Heart right ventricle (tissue), 16 donors: ENCODE measurements at regions of chr2 and their contacts with region 1.

Region 1: GRCh38 chr2:46275973-46276372 is 21.2 kb upstream of the EPAS1 start:
- DNase-seq: peak; percentile 81 to 87
- ATAC-seq: peak; percentile 75 to 84 (median 82)
- H3K4me3 ChIP-seq: peak overlapping the region in 1 of 10 donors; percentile 4
- H3K27ac ChIP-seq: peak overlapping the region; percentile 42 to 82 (median 72)
- H3K4me1 ChIP-seq: peaks cover 16 to 73% (median 47%) of the 10 kb centered on the region in 9 donors
- H3K27me3 ChIP-seq: no peaks in the 10 kb centered on the region
- CTCF ChIP-seq: peak in 2 of 9 donors; percentile 7 to 17

Region 2: DNA sequence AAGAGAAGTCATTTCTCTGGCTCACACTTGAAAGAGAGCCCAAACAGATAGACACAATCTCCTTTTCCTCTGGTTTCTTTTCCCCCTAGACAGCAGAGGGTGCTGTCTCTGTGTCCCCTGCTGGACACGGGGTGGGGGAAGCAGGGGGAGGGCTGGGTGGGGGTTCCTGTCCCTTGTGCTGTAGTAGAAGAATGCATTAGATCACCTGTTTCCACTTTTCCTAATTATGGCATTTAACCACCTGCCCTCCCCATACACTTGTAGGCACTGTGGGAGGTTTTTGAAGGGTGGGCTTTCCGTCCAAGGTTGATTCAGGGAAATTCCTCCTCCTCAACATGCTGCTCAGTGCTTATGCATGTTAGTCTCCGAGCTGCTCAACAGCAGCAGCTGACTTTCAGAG is 185.0 kb before region 1 on chr2:
- intact Hi-C with region 1: loop called in 2 of 10 experiments (anchors 5 to 10 kb)
- DNase-seq: peak in 1 of 2 donors; percentile 25
- ATAC-seq: peak; percentile 72 to 90 (median 84)
- H3K4me3 ChIP-seq: peak overlapping the region in 1 of 10 donors; percentile 8
- H3K27ac ChIP-seq: peak overlapping the region in 8 of 10 donors; percentile 19 to 65 (median 57)
- H3K4me1 ChIP-seq: peaks cover 0 to 51% (median 11%) of the 10 kb centered on the region in 9 donors
- H3K27me3 ChIP-seq: no peaks in the 10 kb centered on the region
- CTCF ChIP-seq: peak in 8 of 9 donors; percentile 33 to 65 (median 48)

Region 3: GRCh38 chr2:46097714-46098480 is 178.1 kb before region 1 on chr2:
- intact Hi-C with region 1: loop called in 2 of 10 experiments (anchors 5 to 10 kb)
- DNase-seq: peak in 1 of 2 donors; percentile 89
- ATAC-seq: peak; percentile 82 to 97 (median 93)
- H3K4me3 ChIP-seq: no peak overlapping the region
- H3K27ac ChIP-seq: peak overlapping the region; percentile 11 to 92 (median 80)
- H3K4me1 ChIP-seq: peaks cover 0 to 39% (median 22%) of the 10 kb centered on the region in 9 donors
- H3K27me3 ChIP-seq: no peaks in the 10 kb centered on the region
- CTCF ChIP-seq: no peak

Region 4: GRCh38 chr2:46134531-46135181 is 141.3 kb before region 1 on chr2:
- intact Hi-C with region 1: loop called in 1 of 10 experiments (anchors 5 kb)
- DNase-seq: peak; percentile 36 to 68
- ATAC-seq: peak; percentile 59 to 87 (median 77)
- H3K4me3 ChIP-seq: no peak overlapping the region
- H3K27ac ChIP-seq: peak overlapping the region; percentile 54 to 85 (median 73)
- H3K4me1 ChIP-seq: peaks cover 5 to 49% (median 32%) of the 10 kb centered on the region in 9 donors
- H3K27me3 ChIP-seq: no peaks in the 10 kb centered on the region
- CTCF ChIP-seq: peak in 1 of 9 donors; percentile 11

Region 5: GRCh38 chr2:46187112-46187618 is 88.8 kb before region 1 on chr2:
- intact Hi-C with region 1: loop called in 1 of 10 experiments (anchors 10 kb)
- DNase-seq: peak in 1 of 2 donors; percentile 52
- ATAC-seq: peak in 7 of 8 donors; percentile 40 to 75 (median 61)
- H3K4me3 ChIP-seq: peak overlapping the region in 7 of 10 donors; percentile 13 to 39 (median 27)
- H3K27ac ChIP-seq: peak overlapping the region; percentile 57 to 89 (median 76)
- H3K4me1 ChIP-seq: peaks cover 0 to 31% (median 20%) of the 10 kb centered on the region in 9 donors
- H3K27me3 ChIP-seq: no peaks in the 10 kb centered on the region
- CTCF ChIP-seq: no peak

Region 6: DNA sequence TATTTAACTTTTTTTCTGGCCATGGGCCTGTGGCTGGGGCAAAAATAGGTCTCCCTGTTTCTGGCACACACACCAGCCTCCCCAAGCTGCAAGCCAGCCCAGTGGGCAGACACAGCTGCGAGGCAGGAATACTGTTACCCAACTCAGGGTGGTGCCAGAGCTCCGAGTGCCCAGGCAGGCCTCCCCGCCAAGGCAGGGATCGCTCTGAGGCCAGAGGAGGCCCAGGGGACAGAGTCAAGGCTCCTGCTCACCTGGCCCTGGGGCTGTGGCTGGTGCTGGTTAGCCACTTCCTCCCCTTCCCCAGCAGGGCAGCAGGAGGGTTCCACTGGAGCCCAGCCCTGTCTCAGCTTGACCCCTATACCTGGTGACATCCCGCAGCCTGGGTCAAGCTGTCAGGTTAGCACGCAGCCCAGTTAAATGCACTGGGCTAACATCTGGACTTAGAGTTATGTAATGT is 45.8 kb before region 1 on chr2:
- intact Hi-C with region 1: loop called in 1 of 10 experiments (anchors 2 kb)
- DNase-seq: peak; percentile 23 to 51
- ATAC-seq: peak; percentile 74 to 91 (median 85)
- H3K4me3 ChIP-seq: no peak overlapping the region
- H3K27ac ChIP-seq: peak overlapping the region in 8 of 10 donors; percentile 4 to 61 (median 42)
- H3K4me1 ChIP-seq: peaks cover 3 to 35% (median 21%) of the 10 kb centered on the region in 9 donors
- H3K27me3 ChIP-seq: no peaks in the 10 kb centered on the region
- CTCF ChIP-seq: peak in 8 of 9 donors; percentile 10 to 57 (median 46)

Region 7: GRCh38 chr2:46470114-46470628 is 194.2 kb after region 1 on chr2:
- intact Hi-C with region 1: no loop called
- DNase-seq: no peak
- ATAC-seq: peak in 7 of 8 donors; percentile 33 to 77 (median 61)
- H3K4me3 ChIP-seq: no peak overlapping the region
- H3K27ac ChIP-seq: peak overlapping the region in 1 of 10 donors; percentile 57
- H3K4me1 ChIP-seq: peaks cover 0 to 19% (median 0%) of the 10 kb centered on the region in 9 donors
- H3K27me3 ChIP-seq: no peaks in the 10 kb centered on the region
- CTCF ChIP-seq: no peak